Sciatic nerve (tissue), 2 donors: ENCODE measurements at regions of chrX and their contacts with region 1.

Region 1: GRCh38 chrX:148229801-148230303 is 248.7 kb downstream of the FMR1NB start:
- DNase-seq: no peak
- ATAC-seq: no peak

Region 2: DNA sequence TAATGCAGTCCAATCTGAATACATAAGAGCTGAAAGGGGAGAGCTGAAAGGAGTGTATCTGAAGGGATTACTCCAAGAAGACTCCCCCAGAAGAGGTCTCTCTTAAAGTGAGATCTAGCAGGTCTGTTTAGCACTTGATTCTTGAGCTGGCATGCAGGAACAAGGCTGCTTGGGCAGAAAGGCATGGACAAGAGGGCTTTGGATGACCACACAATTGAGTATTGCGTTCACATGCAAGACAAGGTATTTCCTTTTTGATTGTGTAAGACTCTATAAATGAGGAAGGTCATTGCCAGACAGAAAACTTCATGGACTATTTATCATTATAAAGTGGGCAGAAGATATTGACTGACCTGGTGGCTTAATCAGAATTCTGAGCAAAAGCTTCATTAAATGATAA is 125.1 kb after region 1 on chrX:
- intact Hi-C with region 1: loop called (anchors 5 kb)
- DNase-seq: no peak
- ATAC-seq: no peak

Region 3: DNA sequence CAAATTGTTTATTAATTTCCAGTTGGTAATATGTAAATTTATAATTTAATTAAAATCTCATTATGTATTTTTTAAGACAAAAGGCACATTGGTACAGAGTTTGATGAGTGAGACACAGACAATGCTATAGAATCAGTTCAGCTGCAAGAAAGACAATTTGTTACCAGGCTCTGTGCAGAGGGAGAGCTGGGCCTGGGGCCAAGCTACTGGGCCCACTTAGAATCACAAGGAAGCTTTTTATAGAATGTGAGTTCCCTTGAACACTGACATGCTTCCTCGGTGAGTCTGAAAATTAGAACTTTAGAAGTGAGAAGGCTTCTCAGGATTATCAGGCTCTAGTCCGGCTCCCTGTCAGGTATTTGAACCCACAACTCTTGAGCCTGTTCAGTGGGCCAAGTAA is 399.6 kb after region 1 on chrX:
- intact Hi-C with region 1: no loop called
- DNase-seq: no peak
- ATAC-seq: no peak

Region 4: GRCh38 chrX:150184487-150184886 is 1954.6 kb after region 1 on chrX:
- intact Hi-C with region 1: no loop called
- DNase-seq: no peak
- ATAC-seq: no peak